AG04450 (cell line): ENCODE measurements at regions of chr9 and their contacts with region 1.

Region 1: GRCh38 chr9:126781186-126782052 is 23.4 kb upstream of the ZBTB43 start:
- DNase-seq: peak; percentile 39
- H3K4me3 ChIP-seq: peak overlapping the region; percentile 32; the same call in 1 of the 2 replicates
- H3K27ac ChIP-seq: no peak overlapping the region
- H3K27me3 ChIP-seq: peaks cover 21% of the 10 kb centered on the region
- CTCF ChIP-seq: peak; percentile 91

Region 2: DNA sequence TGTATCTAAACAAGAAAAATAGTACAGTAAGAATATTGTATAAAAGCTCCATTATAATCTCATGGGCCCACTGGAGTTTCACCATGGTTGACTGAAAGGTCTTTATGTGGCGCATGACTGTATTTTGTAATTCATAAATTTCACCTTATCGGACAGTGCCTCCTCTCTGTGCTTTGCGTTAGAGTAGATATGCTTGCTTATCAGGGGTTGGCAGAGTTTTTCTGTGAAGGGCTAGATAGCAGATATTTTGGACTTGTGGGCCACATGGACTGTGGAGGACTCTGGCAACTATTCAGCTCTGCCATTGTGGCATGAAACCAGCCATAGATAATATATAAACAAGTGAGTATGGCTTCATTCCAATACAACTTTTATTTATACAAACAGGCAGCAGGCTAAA is 1496.6 kb before region 1 on chr9:
- CTCF ChIA-PET with region 1: no interaction called
- POLR2A ChIA-PET with region 1: interaction called, 11 read pairs
- DNase-seq: no peak
- H3K4me3 ChIP-seq: no peak overlapping the region
- H3K27ac ChIP-seq: no peak overlapping the region
- H3K27me3 ChIP-seq: no peaks in the 10 kb centered on the region
- CTCF ChIP-seq: no peak

Region 3: DNA sequence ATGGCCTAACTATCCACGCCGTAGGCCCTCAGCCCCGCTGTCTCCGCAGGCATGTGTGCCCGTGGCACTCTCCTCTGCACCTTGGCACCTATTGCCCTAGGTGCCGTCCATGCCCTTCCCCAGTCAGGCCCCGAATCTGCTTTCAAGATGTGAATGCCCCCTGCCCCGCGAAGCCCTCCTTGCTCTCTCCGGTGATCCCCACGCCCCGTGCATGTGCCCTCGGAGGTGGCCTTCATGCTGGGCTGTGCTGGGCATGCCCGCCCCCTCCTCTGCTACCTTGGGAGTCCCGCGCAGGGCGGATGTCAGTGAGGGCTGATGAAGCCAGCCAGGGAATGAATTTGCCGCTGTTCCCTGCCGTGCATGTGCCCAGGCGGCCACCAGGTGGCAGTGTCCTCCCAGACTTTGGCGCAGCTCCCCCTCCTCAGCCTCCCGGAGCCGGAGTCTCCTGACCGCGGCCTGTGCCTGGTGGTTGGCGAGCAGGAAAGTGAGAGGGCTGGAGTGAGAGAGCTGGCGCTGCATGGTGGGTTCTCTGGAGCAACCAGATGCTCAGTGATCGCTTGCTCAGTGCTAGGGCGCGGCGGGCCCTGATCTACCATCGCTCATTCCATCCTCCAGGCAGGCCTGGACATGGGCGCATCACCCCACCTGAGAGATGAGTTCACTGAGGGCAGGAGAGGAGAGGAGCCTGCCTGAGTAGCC is 280.6 kb before region 1 on chr9:
- CTCF ChIA-PET with region 1: interaction called, 55 read pairs
- POLR2A ChIA-PET with region 1: no interaction called
- DNase-seq: peak; percentile 50
- H3K4me3 ChIP-seq: no peak overlapping the region
- H3K27ac ChIP-seq: no peak overlapping the region
- H3K27me3 ChIP-seq: peaks cover 2% of the 10 kb centered on the region
- CTCF ChIP-seq: peak; percentile 91

Region 4: DNA sequence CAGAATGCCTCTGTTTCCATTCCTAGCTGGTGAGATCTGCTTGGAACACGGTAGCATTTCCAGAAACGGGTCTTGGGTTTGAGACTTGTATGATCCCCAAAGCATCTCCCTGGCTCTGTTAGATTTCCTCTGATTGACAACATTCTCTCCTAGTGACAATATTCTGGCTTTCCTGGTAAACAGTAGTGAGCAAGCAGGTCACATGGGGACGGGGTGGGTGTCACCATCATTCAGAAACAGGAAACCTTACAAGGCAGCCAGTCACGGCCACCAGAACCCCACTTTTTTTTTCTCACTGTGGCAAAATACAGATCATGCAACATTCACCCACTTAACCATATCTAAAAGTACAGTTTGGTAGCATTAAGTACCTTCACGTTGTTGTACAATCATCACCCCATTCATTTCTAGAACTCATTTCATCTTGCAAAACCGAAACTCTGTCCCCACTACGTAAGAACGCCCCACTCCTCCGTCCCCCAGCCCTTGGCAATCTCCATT is 257.8 kb before region 1 on chr9:
- CTCF ChIA-PET with region 1: interaction called, 13 read pairs
- POLR2A ChIA-PET with region 1: no interaction called
- DNase-seq: no peak
- H3K4me3 ChIP-seq: no peak overlapping the region
- H3K27ac ChIP-seq: no peak overlapping the region
- H3K27me3 ChIP-seq: peaks cover 83% of the 10 kb centered on the region
- CTCF ChIP-seq: no peak

Region 5: GRCh38 chr9:126704873-126705766 is 76.3 kb before region 1 on chr9:
- CTCF ChIA-PET with region 1: interaction called, 180 read pairs
- POLR2A ChIA-PET with region 1: interaction called, 3 read pairs
- DNase-seq: no peak
- H3K4me3 ChIP-seq: peak overlapping the region; percentile 7; the same call in 1 of the 2 replicates
- H3K27ac ChIP-seq: no peak overlapping the region
- H3K27me3 ChIP-seq: peaks cover 29% of the 10 kb centered on the region
- CTCF ChIP-seq: peak; percentile 86

Region 6: DNA sequence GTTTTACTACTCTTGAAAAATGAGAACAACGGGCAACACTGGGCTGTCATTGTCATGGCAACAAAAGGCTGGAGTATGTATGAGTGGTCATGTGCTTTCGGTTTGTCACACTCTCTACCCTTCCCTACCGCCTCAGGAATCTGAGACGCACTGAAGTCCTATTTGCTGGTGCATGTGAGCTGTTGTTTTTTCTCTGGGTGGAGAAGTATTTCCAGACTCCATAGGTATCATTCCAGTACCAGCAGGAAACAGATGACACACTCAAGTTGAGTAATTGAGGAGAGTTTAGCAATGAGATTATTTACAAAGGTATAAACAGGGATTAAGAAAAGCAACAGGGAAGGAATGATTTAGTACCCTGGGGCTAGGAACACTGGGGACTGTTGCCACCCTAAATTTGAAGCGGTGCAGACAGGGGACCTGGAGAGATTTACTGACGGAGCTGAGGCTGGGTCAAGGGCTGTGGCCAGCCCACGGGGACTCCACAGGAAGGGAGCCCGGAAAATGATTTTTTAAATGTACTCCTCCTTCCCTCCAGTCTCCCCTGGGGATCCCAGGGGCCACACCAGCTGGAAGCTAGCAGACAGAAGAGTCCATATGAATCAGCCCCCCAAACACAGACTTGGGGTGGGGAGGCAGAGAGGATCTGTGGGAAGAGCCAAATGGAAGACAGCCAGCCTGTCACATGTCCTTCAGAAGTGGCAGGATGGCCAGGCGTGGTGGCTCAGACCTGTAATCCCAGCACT is 10.2 kb after region 1 on chr9:
- CTCF ChIA-PET with region 1: interaction called, 10 read pairs
- POLR2A ChIA-PET with region 1: interaction called, 5 read pairs
- DNase-seq: peak; percentile 54
- H3K4me3 ChIP-seq: no peak overlapping the region
- H3K27ac ChIP-seq: peak overlapping the region; percentile 57
- H3K27me3 ChIP-seq: peaks cover 5% of the 10 kb centered on the region
- CTCF ChIP-seq: no peak